Lower lobe of right lung (tissue), 2 donors: ENCODE measurements at regions of chr22 and their contacts with region 1.

Region 1: GRCh38 chr22:41517172-41518047 is 26.9 kb downstream of the POLR3H start:
- DNase-seq: no peak
- ATAC-seq: peak; percentile 47 to 68
- H3K4me3 ChIP-seq: no peak overlapping the region
- H3K27ac ChIP-seq: no peak overlapping the region
- H3K4me1 ChIP-seq: peaks cover 5% of the 10 kb centered on the region
- H3K27me3 ChIP-seq: no peaks in the 10 kb centered on the region
- CTCF ChIP-seq: peak; percentile 85

Region 2: DNA sequence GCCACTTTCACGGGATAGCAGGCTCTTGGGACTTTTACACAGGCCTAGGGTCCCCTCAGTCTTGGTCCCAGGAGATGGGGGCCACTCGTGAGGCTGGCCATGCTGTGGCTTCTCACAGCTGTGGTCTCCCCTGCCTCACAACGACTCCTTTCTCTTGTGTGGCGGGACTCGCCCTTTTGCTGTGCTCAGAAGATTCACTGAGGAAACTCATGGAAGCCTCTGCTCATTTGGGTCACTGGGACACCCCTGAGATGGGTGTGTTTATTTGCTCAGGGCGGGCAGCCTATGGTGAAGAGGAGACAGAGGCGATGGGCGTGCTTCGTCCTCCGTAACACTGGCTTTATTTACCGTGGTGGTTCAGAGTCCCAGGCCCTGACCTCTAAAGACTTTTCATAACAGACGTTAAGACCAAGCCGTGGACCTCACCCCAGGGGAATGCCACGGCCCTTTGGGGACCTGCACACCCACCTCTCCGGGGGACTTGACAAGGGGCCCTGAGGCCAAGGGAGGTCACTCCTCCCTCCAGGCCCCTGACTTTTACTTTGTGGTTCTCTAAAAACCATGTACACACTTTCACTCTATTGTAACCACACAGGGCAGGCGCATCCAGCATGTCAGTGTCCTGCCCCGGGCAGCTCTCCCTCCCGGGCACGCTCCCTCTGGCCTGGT is 120.1 kb before region 1 on chr22:
- intact Hi-C with region 1: loop called (anchors 10 kb)
- DNase-seq: no peak
- ATAC-seq: no peak
- H3K4me3 ChIP-seq: no peak overlapping the region
- H3K27ac ChIP-seq: no peak overlapping the region
- H3K4me1 ChIP-seq: peaks cover 29% of the 10 kb centered on the region
- H3K27me3 ChIP-seq: no peaks in the 10 kb centered on the region
- CTCF ChIP-seq: no peak

Region 3: DNA sequence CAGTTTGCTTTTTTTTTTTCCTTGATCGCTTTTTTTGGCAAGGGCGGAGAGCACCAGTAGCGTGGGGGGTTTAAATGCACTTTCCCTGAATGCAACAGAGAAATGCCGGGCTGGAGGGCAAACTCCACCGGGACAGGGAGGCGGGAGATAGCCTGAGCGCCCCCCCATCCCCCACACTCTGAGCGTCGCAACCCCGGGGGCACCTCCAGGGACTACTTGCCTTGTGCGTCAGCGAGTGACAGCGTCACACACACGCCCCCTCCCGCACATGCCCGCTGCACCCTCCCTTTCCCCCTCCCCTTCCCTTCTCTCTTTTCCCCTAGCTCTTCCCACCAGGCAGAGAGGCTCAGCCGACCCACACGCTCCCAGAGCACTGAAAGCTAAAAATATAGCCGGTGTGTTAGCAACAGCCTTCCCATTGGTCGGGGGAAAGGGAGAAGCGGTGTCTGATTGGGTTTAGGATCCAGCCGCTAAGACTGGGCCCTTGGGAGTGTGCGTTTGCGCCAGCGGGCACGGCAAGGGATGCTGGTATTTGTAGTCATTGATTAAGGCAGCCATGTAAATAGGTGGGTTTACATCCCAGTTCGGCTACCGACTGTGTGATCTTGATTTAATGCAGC is 69.1 kb before region 1 on chr22:
- intact Hi-C with region 1: no loop called
- DNase-seq: peak; percentile 96
- ATAC-seq: peak; percentile 81 to 90
- H3K4me3 ChIP-seq: peak overlapping the region; percentile 90
- H3K27ac ChIP-seq: peak overlapping the region; percentile 98
- H3K4me1 ChIP-seq: peaks cover 16% of the 10 kb centered on the region
- H3K27me3 ChIP-seq: no peaks in the 10 kb centered on the region
- CTCF ChIP-seq: no peak

Region 4: GRCh38 chr22:41557401-41558240 is 40.2 kb after region 1 on chr22:
- intact Hi-C with region 1: no loop called
- DNase-seq: peak; percentile 75
- ATAC-seq: peak; percentile 83 to 84
- H3K4me3 ChIP-seq: no peak overlapping the region
- H3K27ac ChIP-seq: peak overlapping the region; percentile 68
- H3K4me1 ChIP-seq: peaks cover 25% of the 10 kb centered on the region
- H3K27me3 ChIP-seq: no peaks in the 10 kb centered on the region
- CTCF ChIP-seq: no peak

Region 5: GRCh38 chr22:41589391-41590241 is 72.2 kb after region 1 on chr22 and contains the start of gene PMM1:
- intact Hi-C with region 1: no loop called
- DNase-seq: peak; percentile 100
- ATAC-seq: peak; percentile 96 to 99
- H3K4me3 ChIP-seq: peak within 1 kb of the TSS; percentile 95
- H3K27ac ChIP-seq: peak within 1 kb of the TSS; percentile 88
- H3K4me1 ChIP-seq: peaks cover 22% of the 10 kb centered on the region
- H3K27me3 ChIP-seq: no peaks in the 10 kb centered on the region
- CTCF ChIP-seq: no peak
- total RNA-seq, gene PMM1: 47.3 TPM